ENCODE measurements at regions of chr10 and their contacts with region 1.

Region 1: GRCh38 chr10:117174439-117175214 is 22.7 kb upstream of the KCNK18 start:
- DNase-seq: peak; percentile 84
- H3K4me3 ChIP-seq: peak overlapping the region; percentile 52 to 64
- H3K27ac ChIP-seq: no peak overlapping the region
- H3K4me1 ChIP-seq: peaks cover 0 to 9% of the 10 kb centered on the region in 2 experiments; a peak in 1 of 4 replicates
- H3K27me3 ChIP-seq: peaks cover 37% of the 10 kb centered on the region
- CTCF ChIP-seq: peak; percentile 89
- EP300 ChIP-seq: no peak
- RAD21 ChIP-seq: peak; percentile 85

Region 2: GRCh38 chr10:116627386-116627933 is 547.2 kb before region 1 on chr10:
- CTCF ChIA-PET with region 1: interaction called, 27 read pairs
- POLR2A ChIA-PET with region 1: no interaction called
- DNase-seq: peak; percentile 92
- H3K4me3 ChIP-seq: peak overlapping the region; percentile 32 to 39
- H3K27ac ChIP-seq: no peak overlapping the region
- H3K4me1 ChIP-seq: no peaks in the 10 kb centered on the region; a peak in 1 of 4 replicates
- H3K27me3 ChIP-seq: peaks cover 5% of the 10 kb centered on the region; the same call in 1 of the 2 replicates
- CTCF ChIP-seq: peak; percentile 45
- EP300 ChIP-seq: no peak
- RAD21 ChIP-seq: peak; percentile 65

Region 3: DNA sequence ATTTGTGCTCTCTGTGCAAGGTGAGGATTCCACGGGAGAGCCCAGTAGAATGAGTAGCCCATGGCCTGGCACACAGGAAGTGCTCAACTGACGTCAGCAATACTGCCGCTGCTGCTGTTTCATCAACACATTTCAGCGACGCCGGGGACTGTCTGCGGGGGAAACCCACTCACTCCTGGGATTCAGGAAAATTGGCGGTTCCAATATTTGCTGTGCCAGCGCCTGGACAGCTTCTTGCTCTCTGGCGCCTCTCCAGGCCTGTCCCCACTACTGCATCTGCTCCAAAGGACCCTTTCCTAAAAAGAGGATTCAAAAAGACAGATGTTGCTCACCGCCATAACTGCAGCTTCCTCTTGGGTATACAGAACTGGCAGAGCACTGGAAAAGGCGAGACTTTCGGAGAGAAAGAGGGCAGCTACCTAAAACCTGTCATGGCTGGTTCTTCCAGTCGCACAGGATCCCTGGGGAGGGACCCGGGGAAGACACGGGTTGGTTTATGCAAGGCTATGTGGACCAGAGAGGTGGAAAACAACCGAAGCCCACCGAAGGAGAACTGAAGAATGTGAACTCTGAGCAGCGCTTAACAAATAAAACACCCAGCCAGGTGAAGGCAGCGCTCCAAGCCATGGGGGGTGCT is 365.0 kb before region 1 on chr10:
- CTCF ChIA-PET with region 1: interaction called, 265 read pairs
- POLR2A ChIA-PET with region 1: no interaction called
- DNase-seq: peak; percentile 70
- H3K4me3 ChIP-seq: no peak overlapping the region
- H3K27ac ChIP-seq: no peak overlapping the region
- H3K4me1 ChIP-seq: no peaks in the 10 kb centered on the region; a peak in 1 of 4 replicates
- H3K27me3 ChIP-seq: peaks cover 3% of the 10 kb centered on the region; the same call in 1 of the 2 replicates
- CTCF ChIP-seq: peak; percentile 54
- EP300 ChIP-seq: no peak
- RAD21 ChIP-seq: 0 out of 2 replicates have a peak, but pooled peaks have one; percentile 8

Region 4: DNA sequence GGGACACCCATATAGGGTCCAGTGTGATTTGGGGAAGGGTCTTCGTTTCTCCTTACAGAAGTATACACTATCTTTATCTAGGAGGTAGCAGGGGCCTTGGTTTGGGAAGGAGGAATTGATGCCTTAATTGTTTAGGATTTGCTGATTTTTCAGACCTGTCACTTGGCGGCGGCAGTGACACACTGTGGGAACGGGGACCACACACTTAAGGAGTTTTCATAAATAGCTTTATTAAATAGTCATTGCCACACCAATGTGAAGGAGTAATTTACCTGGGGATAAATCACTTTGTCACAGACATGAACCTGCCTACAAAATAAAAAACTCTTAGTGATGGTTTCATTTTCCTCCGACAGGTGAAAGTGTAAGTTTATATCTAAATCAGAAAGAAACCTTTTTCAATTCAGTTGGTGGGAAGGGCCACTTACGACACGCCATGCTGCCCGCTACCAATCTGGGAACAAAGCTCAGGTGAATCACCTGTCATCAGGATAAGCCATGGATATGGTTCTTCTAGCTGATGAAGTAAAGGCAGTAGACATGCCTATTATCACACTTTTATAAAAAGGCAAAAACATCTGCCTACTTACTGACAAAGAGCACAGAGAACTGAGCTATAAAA is 337.6 kb before region 1 on chr10:
- CTCF ChIA-PET with region 1: interaction called, 64 read pairs
- POLR2A ChIA-PET with region 1: no interaction called
- DNase-seq: no peak
- H3K4me3 ChIP-seq: no peak overlapping the region
- H3K27ac ChIP-seq: no peak overlapping the region
- H3K4me1 ChIP-seq: no peaks in the 10 kb centered on the region
- H3K27me3 ChIP-seq: no peaks in the 10 kb centered on the region
- CTCF ChIP-seq: peak; percentile 21; the same call in 1 of the 2 replicates
- EP300 ChIP-seq: no peak
- RAD21 ChIP-seq: peak; percentile 67

Region 5: GRCh38 chr10:117137031-117137910 is 37.4 kb before region 1 on chr10:
- CTCF ChIA-PET with region 1: interaction called, 18 read pairs
- POLR2A ChIA-PET with region 1: no interaction called
- DNase-seq: peak; percentile 74
- H3K4me3 ChIP-seq: peak overlapping the region; percentile 14 to 39; a peak in 3 of 4 replicates
- H3K27ac ChIP-seq: no peak overlapping the region
- H3K4me1 ChIP-seq: peaks cover 0 to 2% of the 10 kb centered on the region in 2 experiments; a peak in 2 of 4 replicates
- H3K27me3 ChIP-seq: peaks cover 94% of the 10 kb centered on the region
- CTCF ChIP-seq: no peak
- EP300 ChIP-seq: no peak
- RAD21 ChIP-seq: no peak

Region 6: DNA sequence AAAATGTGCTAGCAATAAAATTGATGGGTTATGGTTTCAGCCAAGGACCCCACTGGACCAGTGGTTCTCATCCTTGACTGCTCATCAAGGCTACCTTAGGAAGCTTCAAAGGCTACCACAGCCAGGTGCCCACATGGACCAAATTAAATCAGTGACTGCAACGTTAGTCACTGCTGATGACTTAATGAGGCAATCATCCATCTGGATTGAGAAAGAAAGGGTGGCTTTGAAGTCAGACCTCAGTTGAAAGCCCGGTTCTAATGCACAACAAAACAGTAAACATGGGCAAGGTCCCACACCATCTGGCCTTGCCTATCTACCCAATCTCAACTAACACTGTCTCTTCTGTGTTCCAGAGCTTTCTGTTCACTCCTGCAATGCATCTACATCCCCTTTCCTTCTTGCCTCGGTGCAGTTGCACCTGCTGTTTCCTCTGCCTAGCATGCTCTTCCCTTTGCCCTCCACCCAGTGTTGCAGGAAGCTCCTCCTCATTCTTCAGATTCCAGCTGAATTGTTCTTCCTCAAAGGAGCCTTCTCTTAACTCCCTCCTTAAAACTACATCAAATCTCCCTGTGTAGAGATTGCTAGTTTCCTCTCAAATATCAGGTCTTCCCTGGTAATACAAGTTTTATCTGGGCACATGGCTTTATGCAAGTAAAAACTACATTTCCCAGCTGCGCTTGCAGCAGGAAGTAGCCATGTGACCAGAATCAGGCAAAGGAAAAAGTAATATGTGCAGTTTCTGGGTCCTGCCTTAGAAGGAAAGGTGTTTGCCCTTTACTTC is 12.4 kb after region 1 on chr10:
- CTCF ChIA-PET with region 1: interaction called, 14 read pairs
- POLR2A ChIA-PET with region 1: no interaction called
- DNase-seq: no peak
- H3K4me3 ChIP-seq: no peak overlapping the region
- H3K27ac ChIP-seq: no peak overlapping the region
- H3K4me1 ChIP-seq: no peaks in the 10 kb centered on the region
- H3K27me3 ChIP-seq: no peaks in the 10 kb centered on the region
- CTCF ChIP-seq: no peak
- EP300 ChIP-seq: no peak
- RAD21 ChIP-seq: no peak

Region 7: GRCh38 chr10:117204316-117204715 is 29.7 kb after region 1 on chr10:
- CTCF ChIA-PET with region 1: interaction called, 12 read pairs
- POLR2A ChIA-PET with region 1: no interaction called
- DNase-seq: no peak
- H3K4me3 ChIP-seq: no peak overlapping the region
- H3K27ac ChIP-seq: no peak overlapping the region
- H3K4me1 ChIP-seq: no peaks in the 10 kb centered on the region
- H3K27me3 ChIP-seq: no peaks in the 10 kb centered on the region
- CTCF ChIP-seq: no peak
- EP300 ChIP-seq: no peak
- RAD21 ChIP-seq: no peak

Region 8: DNA sequence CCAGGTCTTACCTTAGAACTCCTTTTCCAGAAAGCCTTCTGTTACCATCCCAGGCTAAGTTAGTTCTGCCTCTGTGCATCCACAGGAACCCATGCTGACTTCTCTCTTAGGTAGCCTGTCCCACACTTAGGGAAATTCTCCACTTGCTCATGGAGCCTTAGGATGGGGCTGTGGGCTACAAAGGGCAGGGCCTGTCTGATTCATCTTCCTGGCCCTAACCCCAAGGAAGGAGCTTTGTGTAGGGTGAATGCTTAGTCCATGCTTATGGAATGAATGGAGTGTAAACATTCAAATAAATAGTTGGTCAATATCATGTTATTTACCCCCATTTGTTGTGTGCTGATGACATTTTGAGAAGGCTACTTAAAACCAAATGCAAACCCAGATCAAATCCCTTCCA is 422.6 kb after region 1 on chr10:
- CTCF ChIA-PET with region 1: no interaction called
- POLR2A ChIA-PET with region 1: no interaction called
- DNase-seq: no peak
- H3K4me3 ChIP-seq: no peak overlapping the region
- H3K27ac ChIP-seq: no peak overlapping the region
- H3K4me1 ChIP-seq: no peaks in the 10 kb centered on the region
- H3K27me3 ChIP-seq: no peaks in the 10 kb centered on the region
- CTCF ChIP-seq: no peak
- EP300 ChIP-seq: no peak
- RAD21 ChIP-seq: no peak

Region 9: DNA sequence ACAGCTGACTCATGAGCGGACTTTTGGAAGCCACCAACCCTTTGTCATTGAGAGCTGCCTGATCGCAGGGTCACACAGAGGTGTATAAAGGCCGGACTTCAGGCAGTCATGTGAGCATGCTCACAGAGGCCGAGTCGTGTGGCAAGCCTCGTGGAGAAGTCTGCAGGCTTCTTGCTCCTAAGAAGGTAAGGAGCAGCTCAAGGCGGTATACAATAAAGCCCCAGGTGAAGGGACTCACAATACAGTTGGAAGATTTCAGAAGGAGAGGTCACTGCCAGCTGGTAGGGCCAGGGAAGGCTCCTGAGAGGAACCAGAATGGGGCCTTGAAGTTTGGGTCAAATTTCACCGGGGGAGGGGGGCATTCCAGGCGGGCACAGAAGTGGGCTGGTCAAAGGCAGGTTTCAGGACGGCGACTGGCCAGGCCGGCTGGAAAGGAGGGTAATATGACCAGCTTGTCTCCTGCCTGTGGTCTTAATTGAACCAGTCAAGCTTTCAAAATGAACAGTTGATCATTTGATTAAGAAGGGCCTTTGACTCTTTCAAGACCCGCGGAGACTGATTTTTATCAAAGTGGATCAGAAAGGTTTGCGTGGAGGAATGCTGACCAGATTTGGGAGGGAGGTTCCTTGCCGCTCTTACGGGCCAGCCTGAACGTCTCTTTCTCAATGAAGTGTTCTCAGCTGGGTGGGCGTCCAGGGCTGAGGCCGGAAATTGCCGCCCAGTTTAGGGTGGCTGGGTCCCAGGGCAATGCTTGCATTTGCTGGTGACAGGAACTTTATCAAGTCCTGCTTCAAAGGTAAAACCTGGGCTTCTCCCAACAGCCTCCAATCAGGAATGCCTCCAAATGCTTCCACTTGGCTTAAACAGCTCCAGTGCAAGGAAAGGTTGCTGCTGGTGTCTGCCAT is 546.6 kb after region 1 on chr10:
- CTCF ChIA-PET with region 1: no interaction called
- POLR2A ChIA-PET with region 1: no interaction called
- DNase-seq: no peak
- H3K4me3 ChIP-seq: no peak overlapping the region
- H3K27ac ChIP-seq: no peak overlapping the region
- H3K4me1 ChIP-seq: peaks cover 0 to 10% of the 10 kb centered on the region in 2 experiments; a peak in 1 of 4 replicates
- H3K27me3 ChIP-seq: no peaks in the 10 kb centered on the region
- CTCF ChIP-seq: no peak
- EP300 ChIP-seq: no peak
- RAD21 ChIP-seq: no peak